Gastrocnemius medialis (tissue), 4 donors: ENCODE measurements at regions of chr6 and their contacts with region 1.

Region 1: GRCh38 chr6:36623547-36624459 is 29.6 kb downstream of the SRSF3 start:
- DNase-seq: peak; percentile 74 to 85
- ATAC-seq: peak; percentile 67 to 82
- H3K4me3 ChIP-seq: no peak overlapping the region
- H3K27ac ChIP-seq: peak overlapping the region in 1 of 4 donors; percentile 38
- H3K4me1 ChIP-seq: peaks cover 27 to 29% of the 10 kb centered on the region in 2 donors
- H3K27me3 ChIP-seq: no peaks in the 10 kb centered on the region
- CTCF ChIP-seq: peak; percentile 74 to 92 (median 88)
- POLR2A ChIP-seq: no peak

Region 2: DNA sequence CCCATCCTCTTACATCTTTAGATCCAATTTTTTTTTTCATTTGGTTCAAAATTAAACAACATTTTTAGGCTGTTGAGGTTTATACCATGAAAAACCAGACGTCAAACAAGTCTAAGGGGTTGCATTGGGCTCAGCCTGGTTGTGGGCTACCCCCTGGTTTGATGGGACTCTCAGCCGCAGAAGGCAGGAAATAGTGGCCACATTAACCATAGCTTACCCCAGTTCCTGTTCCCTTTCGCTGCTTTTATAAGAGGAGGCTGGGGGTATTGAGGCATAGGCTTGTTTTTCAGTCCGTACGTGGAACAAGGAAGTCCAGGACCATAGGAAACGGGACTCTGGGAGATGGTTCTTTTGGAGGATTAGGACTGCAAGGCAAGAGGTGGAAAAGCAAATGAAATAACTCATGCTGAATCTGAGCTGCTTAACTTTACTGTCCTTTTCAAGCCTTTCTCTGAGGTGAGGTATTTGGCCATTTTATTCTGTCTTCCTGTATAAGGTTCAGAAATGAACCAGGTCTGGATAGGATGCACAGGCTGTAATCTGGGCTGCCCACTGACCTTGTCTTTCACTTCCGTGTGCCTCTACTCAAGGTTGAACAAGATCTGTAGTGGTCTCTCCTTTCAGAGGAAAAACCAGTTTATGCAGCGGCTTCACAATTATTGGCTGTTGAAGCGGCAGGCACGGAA is 419.6 kb before region 1 on chr6:
- in situ Hi-C with region 1: no loop called
- intact Hi-C with region 1: no loop called
- DNase-seq: no peak
- ATAC-seq: no peak
- H3K4me3 ChIP-seq: no peak overlapping the region
- H3K27ac ChIP-seq: no peak overlapping the region
- H3K4me1 ChIP-seq: peaks cover 0 to 3% of the 10 kb centered on the region in 2 donors
- H3K27me3 ChIP-seq: no peaks in the 10 kb centered on the region
- CTCF ChIP-seq: no peak
- POLR2A ChIP-seq: no peak

Region 3: DNA sequence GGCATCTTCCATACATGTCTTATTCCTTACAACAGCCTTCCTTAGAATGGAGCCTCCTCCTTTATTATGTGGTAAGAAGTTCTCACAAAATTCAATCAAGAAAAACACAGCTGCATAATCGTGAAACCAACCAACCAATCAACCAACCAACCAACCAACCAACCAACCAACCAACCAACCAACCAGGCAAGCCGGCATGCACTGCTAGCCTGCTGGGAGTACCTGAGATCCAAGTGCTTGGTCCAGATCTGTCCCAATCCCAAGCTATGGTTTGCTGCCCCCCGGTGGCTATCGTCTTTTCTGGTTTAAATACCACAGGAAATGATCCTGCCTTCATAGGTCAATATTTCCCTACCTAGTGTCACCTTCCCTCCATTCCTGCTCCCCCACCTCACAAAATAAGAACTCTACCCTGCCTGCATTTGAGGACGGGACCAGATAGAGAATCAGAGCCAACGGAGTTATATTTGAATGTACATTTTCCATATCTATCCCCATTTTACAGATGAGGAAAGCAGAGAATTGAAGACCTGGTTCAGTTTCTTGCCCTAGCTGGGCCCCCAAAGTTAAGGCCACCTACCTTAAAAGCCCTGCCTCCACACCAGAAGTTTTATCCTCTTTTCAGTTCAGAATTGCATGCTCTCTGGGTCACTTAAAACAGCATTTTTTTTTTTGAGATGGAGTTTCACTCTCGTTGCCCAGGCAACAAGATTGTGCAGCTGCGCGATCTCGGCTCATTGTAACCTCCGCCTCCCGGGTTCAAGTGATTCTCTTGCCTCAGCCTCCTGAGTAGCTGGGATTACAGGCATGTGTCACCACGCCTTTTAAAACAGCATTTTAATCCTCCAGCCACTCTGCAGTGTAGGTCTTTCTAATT is 100.9 kb after region 1 on chr6:
- in situ Hi-C with region 1: no loop called
- intact Hi-C with region 1: loop called (anchors 1 kb)
- DNase-seq: peak; percentile 39 to 67
- ATAC-seq: peak; percentile 73 to 85
- H3K4me3 ChIP-seq: no peak overlapping the region
- H3K27ac ChIP-seq: no peak overlapping the region
- H3K4me1 ChIP-seq: peaks cover 0 to 4% of the 10 kb centered on the region in 2 donors
- H3K27me3 ChIP-seq: no peaks in the 10 kb centered on the region
- CTCF ChIP-seq: peak; percentile 32 to 68 (median 64)
- POLR2A ChIP-seq: no peak

Region 4: DNA sequence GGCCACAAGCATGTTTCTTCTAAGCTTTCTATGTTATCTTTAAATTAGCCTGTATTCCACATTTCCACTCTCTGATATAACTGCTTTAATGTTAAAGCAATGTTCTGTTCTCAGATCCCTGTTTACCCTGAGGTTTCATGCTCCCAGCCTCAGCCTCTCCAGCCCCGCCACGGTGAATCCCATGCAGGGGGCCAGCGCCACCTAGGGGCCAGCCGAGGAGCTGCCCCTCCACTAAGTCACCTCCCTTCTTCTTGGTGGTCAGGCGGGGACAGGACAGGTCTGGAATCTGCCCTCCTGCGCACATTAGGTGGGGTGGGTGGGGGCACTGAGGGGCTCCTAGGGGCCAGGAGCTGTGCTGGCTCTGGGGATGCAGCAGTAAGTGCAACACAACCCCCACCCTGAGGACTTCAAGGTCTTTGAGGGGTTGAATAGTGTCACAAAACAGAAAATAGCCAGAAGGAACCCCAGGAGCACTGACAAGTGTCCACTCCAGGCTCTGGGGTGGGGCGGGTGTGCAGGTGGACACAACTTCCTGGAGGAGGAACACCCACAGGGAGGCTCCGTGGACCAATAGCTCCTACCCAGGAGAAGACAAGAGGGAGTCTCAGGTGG is 135.5 kb after region 1 on chr6:
- in situ Hi-C with region 1: loop called (anchors 5 to 10 kb)
- intact Hi-C with region 1: loop called (anchors 1 kb)
- DNase-seq: peak; percentile 68 to 73
- ATAC-seq: peak; percentile 89 to 92
- H3K4me3 ChIP-seq: no peak overlapping the region
- H3K27ac ChIP-seq: no peak overlapping the region
- H3K4me1 ChIP-seq: peaks cover 0 to 3% of the 10 kb centered on the region in 2 donors
- H3K27me3 ChIP-seq: no peaks in the 10 kb centered on the region
- CTCF ChIP-seq: peak; percentile 91 to 100 (median 95)
- POLR2A ChIP-seq: no peak

Region 5: DNA sequence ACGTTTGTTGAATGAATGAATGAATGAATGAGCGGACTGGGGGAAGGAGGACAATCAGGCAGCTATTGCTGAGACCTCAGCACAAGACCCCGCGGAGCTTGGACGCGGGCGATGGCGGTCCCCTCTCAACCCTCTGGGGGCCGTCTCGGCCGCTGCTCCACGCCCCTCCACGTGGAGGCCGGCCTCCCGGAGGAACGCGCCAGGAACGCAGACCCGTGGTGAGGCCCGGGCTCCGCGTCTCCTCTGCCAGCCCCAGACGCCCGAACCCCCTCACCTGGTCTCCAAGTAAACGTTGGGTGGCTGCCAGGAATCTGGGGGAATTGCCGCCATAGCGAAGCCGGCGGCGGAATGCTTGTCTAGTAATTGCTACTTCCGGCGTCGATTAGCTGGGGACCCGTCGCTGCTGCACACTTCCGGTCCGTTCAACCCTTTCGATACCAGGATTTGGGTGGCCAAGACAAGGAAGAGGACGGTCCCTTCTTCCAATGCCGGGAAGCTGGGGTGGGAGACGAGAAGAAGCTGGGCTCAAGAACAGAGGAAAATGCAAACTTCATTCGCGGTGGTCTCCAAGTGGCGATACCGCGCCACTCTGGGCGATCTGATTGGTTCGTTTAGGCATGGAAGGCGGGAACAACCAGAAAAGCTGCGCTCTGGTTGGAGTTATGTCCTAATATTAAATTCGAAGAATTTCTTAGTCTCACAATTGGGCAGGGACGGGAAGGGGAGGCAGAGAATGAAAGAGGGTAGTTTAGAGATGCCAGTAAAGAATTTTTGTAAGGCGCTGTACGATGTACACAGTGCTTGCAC is 250.8 kb after region 1 on chr6 and contains the start of gene PPIL1:
- in situ Hi-C with region 1: loop called in 1 of 4 experiments (anchors 25 kb)
- intact Hi-C with region 1: no loop called
- DNase-seq: peak; percentile 61 to 74
- ATAC-seq: peak; percentile 95 to 96
- H3K4me3 ChIP-seq: peak within 1 kb of the TSS; percentile 74 to 98 (median 91)
- H3K27ac ChIP-seq: peak within 1 kb of the TSS; percentile 81 to 93 (median 88)
- H3K4me1 ChIP-seq: peaks cover 11 to 20% of the 10 kb centered on the region in 2 donors
- H3K27me3 ChIP-seq: no peaks in the 10 kb centered on the region
- CTCF ChIP-seq: no peak
- POLR2A ChIP-seq: peak in 1 of 2 donors; percentile 50
- total RNA-seq, gene PPIL1: 5.4 to 18.7 (median 16.8) TPM